GM13976 (cell line): ENCODE measurements at regions of chr15 and their contacts with region 1.

Region 1: DNA sequence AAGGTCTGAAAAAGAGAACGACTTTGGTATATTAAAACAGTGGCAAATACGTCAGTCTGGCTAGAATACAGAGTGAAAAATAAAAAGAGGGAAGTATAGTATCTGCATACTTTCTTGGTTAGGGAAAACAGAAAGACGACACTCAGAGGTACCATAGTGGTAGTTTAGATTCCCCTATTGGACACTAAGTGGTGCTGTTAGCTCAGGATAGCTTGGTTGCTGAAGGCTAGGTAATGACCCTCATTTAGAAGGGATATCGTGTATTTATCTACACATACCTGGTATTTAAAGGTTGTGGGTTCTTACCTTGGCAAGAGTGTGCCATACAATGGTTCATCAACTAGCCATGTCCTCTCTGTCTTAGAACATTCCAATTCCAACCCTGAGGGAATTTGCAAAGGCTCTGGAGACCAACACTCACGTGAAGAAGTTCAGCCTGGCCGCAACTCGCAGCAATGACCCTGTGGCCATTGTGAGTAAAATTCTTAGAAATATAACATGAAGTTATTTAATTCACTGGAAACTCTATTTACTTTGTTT is 31.0 kb downstream of the TMOD2 start:
- DNase-seq: peak; percentile 28
- CTCF ChIP-seq: no peak

Region 2: GRCh38 chr15:51649659-51650521 is 132.5 kb before region 1 on chr15:
- in situ Hi-C with region 1: loop called (anchors 5 kb)
- DNase-seq: peak; percentile 67
- CTCF ChIP-seq: peak; percentile 69